Sciatic nerve (tissue), 2 donors: ENCODE measurements at regions of chrX and their contacts with region 1.

Region 1: GRCh38 chrX:29746326-29746725 is 469.0 kb upstream of the MAGEB2 start:
- DNase-seq: no peak
- ATAC-seq: no peak

Region 2: DNA sequence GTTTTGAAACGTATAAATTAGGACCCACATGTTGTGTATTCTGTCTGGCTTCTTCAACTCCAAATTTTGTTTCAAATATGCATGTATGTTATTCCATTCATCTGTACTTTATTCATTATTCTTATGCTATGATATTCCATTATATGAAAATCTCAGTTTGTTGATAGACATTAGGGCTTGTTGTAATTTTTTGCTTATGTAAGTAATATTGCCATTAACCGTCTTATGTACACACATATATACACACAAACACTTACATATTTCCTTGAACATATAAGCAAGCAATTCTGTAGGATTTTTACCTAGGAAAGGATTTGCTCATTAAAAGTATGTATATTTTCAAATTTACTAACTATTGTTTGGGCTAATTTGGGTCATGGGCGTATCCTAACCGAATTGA is 339.0 kb before region 1 on chrX:
- intact Hi-C with region 1: no loop called
- DNase-seq: no peak
- ATAC-seq: no peak

Region 3: DNA sequence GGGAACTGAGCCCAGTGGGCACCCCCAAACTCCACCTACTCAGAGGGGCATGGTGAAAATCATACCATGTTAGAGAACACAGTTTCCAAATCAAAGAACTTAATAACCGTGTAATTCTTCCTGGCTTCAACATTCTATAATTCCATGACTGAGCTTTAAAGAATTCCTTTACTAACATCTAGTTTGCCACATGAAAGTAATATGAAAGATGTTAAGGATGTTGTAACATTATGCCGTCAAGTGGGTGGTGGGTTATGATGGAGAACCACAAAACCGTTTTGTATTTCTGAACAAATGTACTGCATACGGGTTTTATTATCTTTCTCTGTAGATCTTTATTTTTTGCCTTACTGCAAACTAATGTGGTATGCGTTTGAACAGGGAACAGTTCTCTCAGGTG is 80.0 kb before region 1 on chrX:
- intact Hi-C with region 1: loop called (anchors 2 kb)
- DNase-seq: no peak
- ATAC-seq: no peak